Left ventricle myocardium inferior (tissue), 1 donor: ENCODE measurements at regions of chr10 and their contacts with region 1.

Region 1: GRCh38 chr10:118720685-118721538 is 33.9 kb downstream of the CACUL1 start:
- DNase-seq: no peak
- H3K4me3 ChIP-seq: no peak overlapping the region
- H3K27ac ChIP-seq: no peak overlapping the region
- H3K4me1 ChIP-seq: peaks cover 26% of the 10 kb centered on the region
- H3K27me3 ChIP-seq: no peaks in the 10 kb centered on the region
- CTCF ChIP-seq: peak; percentile 89

Region 2: DNA sequence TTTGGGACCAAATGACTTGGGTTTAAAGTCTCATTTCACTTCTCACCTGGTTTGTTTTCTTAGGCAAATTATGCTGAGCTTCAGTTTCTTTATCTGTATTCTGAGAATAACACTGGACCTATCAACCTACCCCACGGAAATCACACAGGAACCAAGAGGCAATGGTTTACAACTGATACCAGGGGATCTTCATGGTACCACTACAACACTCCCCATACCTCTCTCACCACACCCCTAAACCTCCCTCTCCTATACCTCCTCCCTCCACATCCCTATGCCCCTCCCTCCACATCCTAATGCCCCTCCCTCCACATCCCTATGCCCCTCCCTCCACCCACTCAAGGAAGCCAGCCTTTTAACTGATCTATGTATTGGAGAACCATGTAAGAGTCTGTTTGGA is 388.7 kb before region 1 on chr10:
- intact Hi-C with region 1: no loop called
- DNase-seq: no peak
- H3K4me3 ChIP-seq: no peak overlapping the region
- H3K27ac ChIP-seq: no peak overlapping the region
- H3K4me1 ChIP-seq: peaks cover 17% of the 10 kb centered on the region
- H3K27me3 ChIP-seq: no peaks in the 10 kb centered on the region
- CTCF ChIP-seq: no peak

Region 3: DNA sequence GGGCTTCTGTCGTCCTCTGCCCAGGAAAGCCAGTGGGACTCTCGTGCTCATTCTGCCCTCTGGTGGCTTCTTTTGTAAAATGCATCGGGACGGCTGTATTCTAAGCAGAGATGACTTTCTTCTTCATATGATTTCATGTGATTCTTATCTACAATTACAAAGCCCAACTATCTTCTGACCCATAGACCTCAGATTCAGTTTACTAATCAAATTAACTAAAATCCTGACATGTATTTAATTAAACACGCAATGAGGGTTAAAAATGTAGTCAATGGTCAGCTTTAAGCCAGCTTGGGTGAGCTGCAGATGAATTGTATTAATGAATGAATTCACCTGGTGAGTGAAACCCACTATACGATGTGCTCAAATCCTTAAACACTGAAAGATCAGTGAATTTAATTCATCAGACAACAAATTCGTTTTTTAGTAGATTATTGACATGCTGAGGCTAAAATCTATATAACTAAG is 261.2 kb before region 1 on chr10:
- intact Hi-C with region 1: no loop called
- DNase-seq: peak; percentile 19
- H3K4me3 ChIP-seq: no peak overlapping the region
- H3K27ac ChIP-seq: no peak overlapping the region
- H3K4me1 ChIP-seq: peaks cover 3% of the 10 kb centered on the region
- H3K27me3 ChIP-seq: peaks cover 82% of the 10 kb centered on the region
- CTCF ChIP-seq: peak; percentile 84

Region 4: GRCh38 chr10:118568327-118568848 is 152.5 kb before region 1 on chr10:
- intact Hi-C with region 1: loop called (anchors 5 kb)
- DNase-seq: no peak
- H3K4me3 ChIP-seq: no peak overlapping the region
- H3K27ac ChIP-seq: no peak overlapping the region
- H3K4me1 ChIP-seq: peaks cover 18% of the 10 kb centered on the region
- H3K27me3 ChIP-seq: peaks cover 38% of the 10 kb centered on the region
- CTCF ChIP-seq: peak; percentile 85

Region 5: GRCh38 chr10:118621304-118621948 is 99.5 kb before region 1 on chr10:
- intact Hi-C with region 1: no loop called
- DNase-seq: no peak
- H3K4me3 ChIP-seq: no peak overlapping the region
- H3K27ac ChIP-seq: no peak overlapping the region
- H3K4me1 ChIP-seq: no peaks in the 10 kb centered on the region
- H3K27me3 ChIP-seq: peaks cover 82% of the 10 kb centered on the region
- CTCF ChIP-seq: no peak

Region 6: DNA sequence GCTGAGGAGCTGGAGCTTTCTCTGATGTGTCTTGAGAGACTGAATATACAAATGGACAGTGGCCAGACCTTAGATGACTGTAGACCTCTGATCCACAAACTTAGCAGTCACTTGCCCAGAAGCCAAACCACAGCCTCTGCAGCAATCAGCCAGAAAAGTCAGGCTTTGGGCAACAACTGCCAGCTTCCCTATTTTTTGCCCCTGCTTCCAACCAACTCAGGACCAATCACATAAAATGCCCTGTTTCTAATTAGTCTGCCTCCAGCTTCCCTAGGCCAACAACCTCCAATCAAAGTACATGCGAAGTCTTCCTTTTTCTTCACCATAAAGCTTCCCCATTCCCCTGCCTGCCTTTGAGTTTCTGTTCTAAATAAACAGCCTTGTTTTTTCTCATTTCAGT is 71.6 kb after region 1 on chr10:
- intact Hi-C with region 1: no loop called
- DNase-seq: no peak
- H3K4me3 ChIP-seq: no peak overlapping the region
- H3K27ac ChIP-seq: no peak overlapping the region
- H3K4me1 ChIP-seq: no peaks in the 10 kb centered on the region
- H3K27me3 ChIP-seq: peaks cover 18% of the 10 kb centered on the region
- CTCF ChIP-seq: no peak